Dendritic cell treated with granulocyte-macrophage colony-stimulating factor and Interleukin-4, amounts not matched to agents 40 ng/mL and 50 ng/mL, for 4 days (primary cell): ENCODE measurements at regions of chr12 and their contacts with region 1.

Region 1: GRCh38 chr12:24705741-24706358 is 243.1 kb downstream of the BCAT1 start:
- H3K4me3 Mint-ChIP-seq: peak overlapping the region; percentile 14
- H3K27ac Mint-ChIP-seq: peak overlapping the region; percentile 91
- H3K4me1 Mint-ChIP-seq: peaks cover 26% of the 10 kb centered on the region
- H3K27me3 Mint-ChIP-seq: no peaks in the 10 kb centered on the region

Region 2: GRCh38 chr12:24742378-24742777 is 36.5 kb after region 1 on chr12:
- intact Hi-C with region 1: loop called (anchors 5 kb)
- H3K4me3 Mint-ChIP-seq: no peak overlapping the region
- H3K27ac Mint-ChIP-seq: peak overlapping the region; percentile 71
- H3K4me1 Mint-ChIP-seq: peaks cover 28% of the 10 kb centered on the region
- H3K27me3 Mint-ChIP-seq: no peaks in the 10 kb centered on the region